ENCODE measurements at regions of chr9 and their contacts with region 1.

Region 1: GRCh38 chr9:76987594-76988200 is 31.8 kb upstream of the FOXB2 start:
- DNase-seq: peak in 5 of 10 donors; percentile 45 to 83 (median 66)

Region 2: GRCh38 chr9:76756268-76756640 is 231.4 kb before region 1 on chr9:
- intact Hi-C with region 1: loop called (anchors 2 kb)
- DNase-seq: peak in 8 of 10 donors; percentile 30 to 88 (median 52)

Region 3: GRCh38 chr9:76810377-76810957 is 177.2 kb before region 1 on chr9:
- intact Hi-C with region 1: loop called (anchors 1 kb)
- DNase-seq: peak in 5 of 10 donors; percentile 15 to 70 (median 48)

Region 4: DNA sequence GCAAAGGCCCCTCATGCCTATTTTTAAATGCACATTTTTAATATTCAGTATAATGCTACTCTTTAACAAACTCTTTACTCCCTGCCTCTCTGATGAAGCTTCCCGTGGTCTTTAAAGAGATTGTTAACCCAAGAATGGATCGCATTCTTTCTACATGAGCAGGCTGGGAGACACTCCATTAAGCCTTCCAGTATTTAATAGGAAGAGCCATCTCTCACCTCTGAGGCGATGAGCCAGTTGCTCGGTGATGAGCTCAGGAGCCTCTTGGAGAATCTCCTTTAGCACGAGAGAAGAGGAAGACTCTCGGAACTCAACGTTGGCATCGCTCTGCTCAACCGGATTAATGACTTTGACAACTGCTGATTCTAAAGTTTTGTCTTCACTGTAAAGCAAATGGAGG is 141.4 kb before region 1 on chr9:
- intact Hi-C with region 1: no loop called
- DNase-seq: no peak

Region 5: GRCh38 chr9:76893395-76893932 is 94.2 kb before region 1 on chr9:
- intact Hi-C with region 1: loop called (anchors 10 kb)
- DNase-seq: peak in 7 of 10 donors; percentile 31 to 93 (median 54)

Measured in posterior cingulate gyrus (tissue), 11 donors.